ENCODE measurements at regions of chr1 and their contacts with region 1.

Region 1: DNA sequence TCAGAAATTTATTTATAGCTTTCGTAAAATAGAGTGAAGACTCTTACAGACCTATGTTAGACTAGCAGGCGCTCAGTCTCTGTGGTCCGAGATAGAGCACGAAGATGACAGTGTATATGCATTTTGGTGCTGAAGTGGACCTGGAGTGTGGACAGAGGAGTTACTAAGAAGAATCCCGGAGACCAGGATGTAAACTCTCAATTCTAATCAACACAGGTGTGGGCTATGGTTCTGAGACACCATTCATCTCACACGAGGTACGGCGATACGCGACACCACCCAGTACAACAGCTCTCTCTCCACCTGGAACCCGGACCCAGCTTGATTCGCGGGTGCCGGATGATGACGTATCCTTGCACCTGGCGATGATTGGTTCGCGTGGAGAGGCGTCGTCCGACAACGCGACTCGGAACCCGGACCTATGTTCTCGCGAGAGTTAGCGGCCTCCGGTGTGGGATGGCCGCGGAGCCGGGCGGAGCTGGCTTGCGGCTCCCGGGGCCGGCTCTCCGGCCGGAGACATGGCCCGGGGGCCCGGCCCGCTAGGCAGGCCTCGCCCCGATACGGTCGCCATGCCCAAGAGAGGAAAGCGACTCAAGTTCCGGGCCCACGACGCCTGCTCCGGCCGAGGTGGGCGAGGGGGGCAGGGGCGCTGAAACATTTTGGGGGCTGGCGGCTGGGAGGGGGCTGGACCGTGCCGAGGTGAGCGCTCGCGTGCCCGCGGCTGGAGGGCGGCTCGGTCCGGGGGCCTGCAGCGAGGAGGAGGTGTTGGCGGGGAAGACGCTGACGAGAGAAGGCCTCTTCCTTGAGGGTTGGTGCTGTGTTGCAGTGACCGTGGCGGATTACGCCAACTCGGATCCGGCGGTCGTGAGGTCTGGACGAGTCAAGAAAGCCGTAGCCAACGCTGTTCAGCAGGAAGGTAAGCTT is at the start of gene TMEM183A:
- DNase-seq: peak; percentile 73
- H3K4me3 ChIP-seq: peak within 1 kb of the TSS; percentile 93
- H3K27me3 ChIP-seq: no peaks in the 10 kb centered on the region
- CTCF ChIP-seq: no peak
- polyA plus RNA-seq, gene TMEM183A: 103 and 111 TPM in 2 replicates

Region 2: GRCh38 chr1:203031467-203031866 is 24.3 kb after region 1 on chr1:
- CTCF ChIA-PET with region 1: interaction called, 5 read pairs
- POLR2A ChIA-PET with region 1: interaction called, 12 read pairs
- DNase-seq: no peak
- H3K4me3 ChIP-seq: no peak overlapping the region
- H3K27me3 ChIP-seq: peaks cover 1% of the 10 kb centered on the region
- CTCF ChIP-seq: peak; percentile 51

Measured in BJ (cell line).